Psoas muscle (tissue), 8 donors: ENCODE measurements at regions of chr1 and their contacts with region 1.

Region 1: GRCh38 chr1:156838981-156839410 is 19.9 kb downstream of the INSRR start:
- DNase-seq: no peak
- ATAC-seq: peak; percentile 59 to 69 (median 62)
- H3K4me3 ChIP-seq: no peak overlapping the region
- H3K27ac ChIP-seq: no peak overlapping the region
- H3K4me1 ChIP-seq: no peaks in the 10 kb centered on the region
- H3K27me3 ChIP-seq: peaks cover 0 to 19% (median 5%) of the 10 kb centered on the region in 3 donors
- CTCF ChIP-seq: peak; percentile 80

Region 2: GRCh38 chr1:156860113-156860627 is 21.2 kb after region 1 on chr1:
- intact Hi-C with region 1: loop called (anchors 2 kb)
- DNase-seq: peak; percentile 44 to 73
- ATAC-seq: peak; percentile 65 to 93 (median 84)
- H3K4me3 ChIP-seq: peak overlapping the region; percentile 59
- H3K27ac ChIP-seq: no peak overlapping the region
- H3K4me1 ChIP-seq: peaks cover 19% of the 10 kb centered on the region
- H3K27me3 ChIP-seq: peaks cover 0 to 71% (median 17%) of the 10 kb centered on the region in 3 donors
- CTCF ChIP-seq: peak; percentile 85

Region 3: GRCh38 chr1:156884560-156885184 is 45.7 kb after region 1 on chr1:
- intact Hi-C with region 1: loop called in 1 of 2 experiments (anchors 2 kb)
- DNase-seq: no peak
- ATAC-seq: no peak
- H3K4me3 ChIP-seq: no peak overlapping the region
- H3K27ac ChIP-seq: no peak overlapping the region
- H3K4me1 ChIP-seq: no peaks in the 10 kb centered on the region
- H3K27me3 ChIP-seq: peaks cover 0 to 7% (median 4%) of the 10 kb centered on the region in 3 donors
- CTCF ChIP-seq: no peak

Region 4: DNA sequence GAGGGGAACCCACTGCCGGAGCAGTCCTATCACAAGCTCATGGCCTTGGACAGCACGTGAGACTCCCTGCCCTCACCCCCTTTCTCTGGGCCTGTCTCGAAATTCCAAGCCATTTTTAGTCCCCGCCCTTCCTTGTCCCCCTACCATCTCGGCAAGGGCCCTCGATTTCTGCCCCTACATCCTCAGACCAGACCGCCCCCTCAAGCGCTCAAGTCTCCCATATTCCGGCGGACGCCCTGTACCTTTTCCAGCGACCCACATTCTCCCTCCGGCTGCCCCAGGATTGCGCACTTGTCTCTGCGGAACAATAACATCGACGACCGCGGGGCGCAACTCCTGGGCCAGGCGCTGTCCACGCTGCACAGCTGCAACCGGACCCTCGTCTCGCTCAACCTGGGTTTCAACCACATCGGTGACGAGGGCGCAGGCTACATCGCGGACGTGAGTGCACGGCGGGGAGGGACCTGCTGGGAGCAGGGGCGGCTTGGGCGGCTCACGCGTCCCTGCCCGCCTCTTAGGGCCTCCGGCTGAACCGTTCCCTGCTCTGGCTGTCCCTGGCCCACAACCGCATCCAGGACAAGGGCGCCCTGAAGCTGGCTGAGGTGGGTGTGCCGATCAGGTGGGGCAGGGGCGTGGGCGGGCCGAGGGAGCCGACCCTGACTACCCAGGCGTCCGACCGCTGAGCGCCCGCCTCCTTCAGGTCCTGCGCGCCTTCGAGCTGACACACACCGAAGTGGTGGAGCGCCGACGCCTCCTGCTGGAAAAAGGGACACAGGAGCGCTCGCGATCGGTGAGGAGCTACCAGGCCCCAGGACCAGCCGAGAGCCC is 88.4 kb after region 1 on chr1:
- intact Hi-C with region 1: loop called in 1 of 2 experiments (anchors 5 kb)
- DNase-seq: peak; percentile 69 to 81
- ATAC-seq: peak; percentile 56 to 74 (median 62)
- H3K4me3 ChIP-seq: peak overlapping the region; percentile 48
- H3K27ac ChIP-seq: no peak overlapping the region
- H3K4me1 ChIP-seq: no peaks in the 10 kb centered on the region
- H3K27me3 ChIP-seq: peaks cover 0 to 76% (median 31%) of the 10 kb centered on the region in 3 donors
- CTCF ChIP-seq: peak; percentile 62